ENCODE measurements at regions of chr6 and their contacts with region 1.

Region 1: GRCh38 chr6:30752157-30752927 is 8.0 kb upstream of the IER3 start:
- DNase-seq: peak; percentile 100
- ATAC-seq: peak; percentile 94
- H3K4me3 ChIP-seq: no peak overlapping the region; the same call in 1 of the 2 replicates
- H3K27ac ChIP-seq: peak overlapping the region; percentile 99
- H3K4me1 ChIP-seq: peaks cover 34% of the 10 kb centered on the region
- H3K27me3 ChIP-seq: no peaks in the 10 kb centered on the region
- CTCF ChIP-seq: peak; percentile 13; the same call in 1 of the 2 replicates
- POLR2A ChIP-seq: peak; percentile 78
- RAD21 ChIP-seq: peak; percentile 41

Region 2: DNA sequence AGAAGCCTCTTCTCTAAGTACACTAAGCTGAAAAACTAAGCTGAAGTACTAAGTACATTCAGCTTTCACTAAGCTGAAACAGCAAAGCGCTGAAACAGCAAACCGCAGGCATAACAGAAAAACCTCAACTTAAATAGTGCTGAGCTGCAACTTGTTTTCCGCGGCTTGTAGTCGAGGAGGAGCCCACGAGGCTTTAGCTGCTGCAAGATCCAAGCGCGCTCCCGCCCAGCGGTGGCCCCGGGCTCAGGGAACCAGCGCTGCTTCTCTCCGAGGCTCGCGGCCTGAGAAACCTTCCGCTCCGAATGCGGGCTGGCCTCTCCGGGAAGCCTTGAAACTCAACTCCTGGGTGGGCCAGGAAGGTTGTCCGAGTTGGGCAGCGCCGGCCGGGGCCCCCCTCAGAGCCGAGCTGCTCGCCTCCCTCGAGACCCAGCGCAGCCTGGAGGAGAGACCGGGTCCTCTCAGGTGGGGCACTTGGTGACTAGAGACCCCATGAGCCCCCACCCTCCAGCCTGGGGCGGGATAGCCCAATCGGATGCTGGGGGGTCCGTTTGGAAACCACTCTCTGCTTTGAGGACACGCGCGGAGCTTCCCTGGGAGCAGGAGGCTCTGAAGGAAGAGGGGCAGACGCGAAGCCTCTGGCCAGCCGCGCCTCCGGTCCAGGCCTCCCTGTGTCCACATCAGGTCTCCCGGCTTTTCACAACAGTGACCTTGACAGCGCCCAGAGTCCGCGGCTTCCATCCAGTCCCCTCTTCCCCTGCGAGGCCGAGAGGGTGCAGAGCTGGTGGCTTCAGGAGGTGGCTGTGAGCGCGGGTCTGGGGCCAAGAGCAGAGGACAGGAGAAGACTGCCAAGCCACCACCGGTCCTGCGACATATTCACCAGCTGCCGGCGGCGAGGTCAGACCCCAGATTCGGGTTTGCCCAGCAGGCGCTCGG is 301.2 kb before region 1 on chr6:
- CTCF ChIA-PET with region 1: no interaction called
- POLR2A ChIA-PET with region 1: no interaction called
- dilution Hi-C with region 1: no loop called
- in situ Hi-C with region 1: no loop called
- intact Hi-C with region 1: no loop called
- DNase-seq: peak; percentile 58
- ATAC-seq: peak; percentile 55
- H3K4me3 ChIP-seq: no peak overlapping the region
- H3K27ac ChIP-seq: no peak overlapping the region
- H3K4me1 ChIP-seq: peaks cover 2% of the 10 kb centered on the region; the same call in 1 of the 2 replicates
- H3K27me3 ChIP-seq: peaks cover 84% of the 10 kb centered on the region
- CTCF ChIP-seq: no peak
- POLR2A ChIP-seq: no peak
- RAD21 ChIP-seq: no peak

Region 3: DNA sequence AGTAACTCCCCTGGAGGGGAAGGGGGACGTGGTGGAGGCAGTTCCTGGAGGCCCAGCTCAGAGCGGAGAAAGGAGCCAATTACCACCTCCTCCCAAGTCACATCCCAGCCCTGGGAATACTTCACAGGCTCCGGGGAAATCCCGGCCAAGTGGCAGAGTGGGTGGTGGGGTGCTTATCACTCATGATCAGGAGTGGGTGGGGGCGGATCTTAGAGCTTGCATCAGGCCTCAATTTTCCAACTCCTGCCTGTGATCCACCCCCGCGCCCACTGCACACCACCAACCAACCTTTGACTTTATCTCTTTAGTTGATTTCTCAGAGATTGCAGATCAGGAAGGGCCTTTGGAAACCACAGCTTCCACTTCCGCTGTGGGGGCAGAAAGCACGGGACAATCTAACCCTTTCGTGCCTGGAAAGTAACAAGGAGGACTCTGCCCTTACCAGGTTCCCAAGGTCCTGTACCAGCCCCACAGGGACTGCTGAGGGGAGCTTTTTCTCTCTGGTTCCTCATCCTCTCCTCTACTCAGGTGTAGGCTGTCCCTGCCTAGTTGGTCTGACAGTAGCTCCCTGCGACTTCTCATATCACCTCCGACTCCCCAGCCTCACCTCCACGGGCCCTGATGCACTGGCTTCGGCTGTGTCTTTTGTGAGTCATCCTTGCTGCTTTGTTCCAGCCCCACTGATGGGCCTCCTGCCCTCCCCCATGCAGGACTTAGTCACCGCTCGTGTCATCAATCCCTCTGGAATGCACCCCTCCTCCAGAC is 16.9 kb after region 1 on chr6:
- CTCF ChIA-PET with region 1: no interaction called
- POLR2A ChIA-PET with region 1: interaction called, 14 read pairs
- dilution Hi-C with region 1: no loop called
- in situ Hi-C with region 1: no loop called
- intact Hi-C with region 1: loop called (anchors 2 kb)
- DNase-seq: peak; percentile 98
- ATAC-seq: peak; percentile 95
- H3K4me3 ChIP-seq: peak overlapping the region; percentile 6; the same call in 1 of the 2 replicates
- H3K27ac ChIP-seq: peak overlapping the region; percentile 93
- H3K4me1 ChIP-seq: peaks cover 25% of the 10 kb centered on the region
- H3K27me3 ChIP-seq: no peaks in the 10 kb centered on the region
- CTCF ChIP-seq: no peak
- POLR2A ChIP-seq: peak; percentile 62; the same call in 1 of the 2 replicates
- RAD21 ChIP-seq: peak; percentile 32

Region 4: GRCh38 chr6:30781743-30782424 is 29.5 kb after region 1 on chr6:
- CTCF ChIA-PET with region 1: no interaction called
- POLR2A ChIA-PET with region 1: interaction called, 8 read pairs
- dilution Hi-C with region 1: no loop called
- in situ Hi-C with region 1: no loop called
- intact Hi-C with region 1: loop called (anchors 1 kb)
- DNase-seq: peak; percentile 100
- ATAC-seq: peak; percentile 81
- H3K4me3 ChIP-seq: no peak overlapping the region
- H3K27ac ChIP-seq: peak overlapping the region; percentile 84
- H3K4me1 ChIP-seq: peaks cover 31% of the 10 kb centered on the region
- H3K27me3 ChIP-seq: no peaks in the 10 kb centered on the region
- CTCF ChIP-seq: no peak
- POLR2A ChIP-seq: peak; percentile 38
- RAD21 ChIP-seq: peak; percentile 31; the same call in 1 of the 2 replicates

Region 5: GRCh38 chr6:30795549-30796293 is 43.4 kb after region 1 on chr6:
- CTCF ChIA-PET with region 1: no interaction called
- POLR2A ChIA-PET with region 1: no interaction called
- dilution Hi-C with region 1: no loop called
- in situ Hi-C with region 1: no loop called
- intact Hi-C with region 1: no loop called
- DNase-seq: no peak
- ATAC-seq: no peak
- H3K4me3 ChIP-seq: no peak overlapping the region
- H3K27ac ChIP-seq: no peak overlapping the region
- H3K4me1 ChIP-seq: peaks cover 8% of the 10 kb centered on the region
- H3K27me3 ChIP-seq: no peaks in the 10 kb centered on the region
- CTCF ChIP-seq: no peak
- POLR2A ChIP-seq: no peak
- RAD21 ChIP-seq: no peak

Region 6: GRCh38 chr6:30821862-30822782 is 69.8 kb after region 1 on chr6:
- CTCF ChIA-PET with region 1: interaction called, 10 read pairs
- POLR2A ChIA-PET with region 1: no interaction called
- dilution Hi-C with region 1: no loop called
- in situ Hi-C with region 1: loop called (anchors 5 kb)
- intact Hi-C with region 1: loop called (anchors 1 kb)
- DNase-seq: no peak
- ATAC-seq: no peak
- H3K4me3 ChIP-seq: no peak overlapping the region
- H3K27ac ChIP-seq: no peak overlapping the region
- H3K4me1 ChIP-seq: peaks cover 22% of the 10 kb centered on the region
- H3K27me3 ChIP-seq: no peaks in the 10 kb centered on the region
- CTCF ChIP-seq: peak; percentile 61
- POLR2A ChIP-seq: no peak
- RAD21 ChIP-seq: peak; percentile 37

Region 7: GRCh38 chr6:30907758-30908591 is 155.6 kb after region 1 on chr6 and contains the start of gene GTF2H4:
- CTCF ChIA-PET with region 1: no interaction called
- POLR2A ChIA-PET with region 1: interaction called, 11 read pairs
- dilution Hi-C with region 1: no loop called
- in situ Hi-C with region 1: no loop called
- intact Hi-C with region 1: no loop called
- DNase-seq: peak; percentile 98
- ATAC-seq: peak; percentile 99
- H3K4me3 ChIP-seq: peak within 1 kb of the TSS; percentile 96
- H3K27ac ChIP-seq: peak within 1 kb of the TSS; percentile 77
- H3K4me1 ChIP-seq: peaks cover 5% of the 10 kb centered on the region
- H3K27me3 ChIP-seq: no peaks in the 10 kb centered on the region
- CTCF ChIP-seq: no peak
- POLR2A ChIP-seq: no peak
- RAD21 ChIP-seq: peak; percentile 15; the same call in 1 of the 2 replicates
- total RNA-seq, gene GTF2H4: 6.9 and 13.4 TPM in 2 replicates

Measured in IMR-90 (cell line).